GM18951 (cell line): ENCODE measurements at regions of chr6 and their contacts with region 1.

Region 1: DNA sequence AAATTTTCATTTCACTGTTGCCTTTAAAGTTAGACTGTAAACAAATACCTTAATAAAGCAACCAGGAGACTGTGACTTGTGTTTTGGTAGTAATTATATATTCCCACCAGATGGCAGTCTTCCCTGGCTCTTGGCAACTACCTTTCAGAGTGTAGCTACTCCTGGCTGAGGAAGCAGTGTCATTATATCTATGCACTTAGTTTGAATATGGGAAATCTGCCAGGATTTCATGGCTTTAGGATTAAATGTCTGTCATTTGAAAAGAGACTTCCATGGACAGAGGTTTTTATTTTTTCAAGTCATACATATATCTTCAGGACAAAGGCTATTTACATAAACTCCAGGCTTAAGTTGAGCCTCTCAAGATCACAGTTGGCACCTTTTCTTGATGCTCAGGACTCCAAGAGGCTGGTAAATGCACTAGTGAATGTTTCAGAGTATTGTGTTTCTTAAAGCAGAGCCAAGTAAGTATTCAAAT is 160.1 kb downstream of the C6orf58 start:
- POLR2A ChIP-seq: no peak

Region 2: GRCh38 chr6:128327890-128328289 is 590.8 kb after region 1 on chr6:
- in situ Hi-C with region 1: loop called (anchors 25 kb)
- POLR2A ChIP-seq: no peak

Region 3: DNA sequence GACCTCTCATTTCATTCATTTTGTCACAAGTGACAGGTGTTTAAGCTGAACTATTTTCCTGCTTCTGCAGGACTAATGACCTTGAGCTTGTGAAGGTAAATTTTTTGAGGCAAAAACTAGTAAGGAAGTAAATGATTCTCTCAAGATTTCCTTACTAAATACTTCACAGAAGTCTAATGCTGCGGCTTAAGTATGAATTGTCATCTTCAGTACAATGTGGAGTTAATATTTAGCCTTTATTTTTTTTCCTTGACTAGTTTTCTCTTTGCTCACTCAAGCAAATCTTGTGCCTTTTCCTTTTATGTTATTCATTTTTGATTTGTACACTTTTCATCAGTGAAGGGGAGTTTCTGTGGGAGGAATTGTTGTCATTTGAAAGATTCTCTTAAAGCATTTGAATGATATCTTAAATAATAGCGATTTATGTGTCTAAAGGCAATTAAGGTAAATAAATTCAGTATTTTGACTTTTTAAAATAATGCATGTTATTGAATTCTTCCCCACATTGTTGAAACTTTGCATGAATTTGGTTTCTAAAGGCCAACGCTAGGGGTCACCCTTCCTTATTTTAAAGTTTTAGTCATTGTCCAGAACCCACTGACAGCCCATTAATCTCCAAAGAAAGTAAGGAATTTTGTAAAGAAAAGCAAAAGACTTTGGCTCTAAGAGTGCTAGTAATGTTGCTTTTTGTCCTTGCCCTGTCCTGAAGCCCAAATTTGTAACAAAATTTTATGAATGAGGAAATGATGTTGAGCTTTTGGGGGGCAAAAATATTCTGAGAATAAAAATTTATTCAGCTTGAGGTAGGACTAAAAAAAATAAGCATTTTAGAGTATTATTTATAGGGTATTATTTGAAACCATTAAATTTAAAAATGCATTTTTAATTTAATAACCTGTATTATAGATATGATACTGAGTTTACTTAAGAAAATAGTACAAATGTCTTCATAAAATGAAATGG is 988.5 kb after region 1 on chr6:
- in situ Hi-C with region 1: loop called (anchors 25 kb)
- POLR2A ChIP-seq: no peak